Calu3 (cell line): ENCODE measurements at regions of chr16 and their contacts with region 1.

Region 1: DNA sequence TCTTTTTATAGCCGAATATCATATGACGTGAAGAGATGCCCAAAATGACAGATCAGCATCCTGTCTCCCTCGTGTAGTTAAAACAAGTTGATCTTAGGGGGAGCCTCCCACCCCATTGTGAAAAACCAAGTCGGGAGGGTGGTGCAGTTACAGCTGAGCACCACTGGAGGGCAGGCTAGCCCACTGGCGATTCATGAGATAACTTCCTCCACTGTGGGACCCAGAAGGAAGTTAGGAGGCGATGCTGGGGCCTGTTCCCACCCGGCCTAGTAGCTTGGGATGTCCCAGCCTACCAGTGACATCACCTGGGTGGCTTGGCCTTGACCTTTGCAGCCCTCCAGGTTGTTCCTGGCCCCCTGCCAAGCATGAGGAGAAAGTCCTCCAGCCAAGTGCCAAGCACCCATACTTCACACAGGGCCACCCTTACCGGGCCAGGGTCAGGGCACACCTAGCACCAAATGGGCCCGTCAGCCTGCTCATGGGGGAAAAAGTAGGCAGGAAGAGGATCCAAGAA is 8.1 kb upstream of the CPNE2 start:
- DNase-seq: peak; percentile 76
- H3K4me3 Mint-ChIP-seq: no peak overlapping the region
- H3K27ac Mint-ChIP-seq: no peak overlapping the region
- H3K4me1 Mint-ChIP-seq: no peaks in the 10 kb centered on the region
- H3K27me3 Mint-ChIP-seq: peaks cover 66% of the 10 kb centered on the region
- CTCF ChIP-seq: peak; percentile 94

Region 2: GRCh38 chr16:57167953-57168352 is 83.6 kb after region 1 on chr16:
- CTCF ChIA-PET with region 1: no interaction called
- intact Hi-C with region 1: loop called (anchors 1 kb)
- DNase-seq: no peak
- H3K4me3 Mint-ChIP-seq: no peak overlapping the region
- H3K27ac Mint-ChIP-seq: no peak overlapping the region
- H3K4me1 Mint-ChIP-seq: peaks cover 12% of the 10 kb centered on the region
- H3K27me3 Mint-ChIP-seq: no peaks in the 10 kb centered on the region
- CTCF ChIP-seq: peak; percentile 22

Region 3: GRCh38 chr16:57519796-57520360 is 435.6 kb after region 1 on chr16:
- CTCF ChIA-PET with region 1: no interaction called
- intact Hi-C with region 1: loop called (anchors 10 kb)
- DNase-seq: peak; percentile 90
- H3K4me3 Mint-ChIP-seq: no peak overlapping the region
- H3K27ac Mint-ChIP-seq: no peak overlapping the region
- H3K4me1 Mint-ChIP-seq: peaks cover 6% of the 10 kb centered on the region
- H3K27me3 Mint-ChIP-seq: no peaks in the 10 kb centered on the region
- CTCF ChIP-seq: peak; percentile 99